ENCODE measurements at regions of chr2 and their contacts with region 1.

Region 1: DNA sequence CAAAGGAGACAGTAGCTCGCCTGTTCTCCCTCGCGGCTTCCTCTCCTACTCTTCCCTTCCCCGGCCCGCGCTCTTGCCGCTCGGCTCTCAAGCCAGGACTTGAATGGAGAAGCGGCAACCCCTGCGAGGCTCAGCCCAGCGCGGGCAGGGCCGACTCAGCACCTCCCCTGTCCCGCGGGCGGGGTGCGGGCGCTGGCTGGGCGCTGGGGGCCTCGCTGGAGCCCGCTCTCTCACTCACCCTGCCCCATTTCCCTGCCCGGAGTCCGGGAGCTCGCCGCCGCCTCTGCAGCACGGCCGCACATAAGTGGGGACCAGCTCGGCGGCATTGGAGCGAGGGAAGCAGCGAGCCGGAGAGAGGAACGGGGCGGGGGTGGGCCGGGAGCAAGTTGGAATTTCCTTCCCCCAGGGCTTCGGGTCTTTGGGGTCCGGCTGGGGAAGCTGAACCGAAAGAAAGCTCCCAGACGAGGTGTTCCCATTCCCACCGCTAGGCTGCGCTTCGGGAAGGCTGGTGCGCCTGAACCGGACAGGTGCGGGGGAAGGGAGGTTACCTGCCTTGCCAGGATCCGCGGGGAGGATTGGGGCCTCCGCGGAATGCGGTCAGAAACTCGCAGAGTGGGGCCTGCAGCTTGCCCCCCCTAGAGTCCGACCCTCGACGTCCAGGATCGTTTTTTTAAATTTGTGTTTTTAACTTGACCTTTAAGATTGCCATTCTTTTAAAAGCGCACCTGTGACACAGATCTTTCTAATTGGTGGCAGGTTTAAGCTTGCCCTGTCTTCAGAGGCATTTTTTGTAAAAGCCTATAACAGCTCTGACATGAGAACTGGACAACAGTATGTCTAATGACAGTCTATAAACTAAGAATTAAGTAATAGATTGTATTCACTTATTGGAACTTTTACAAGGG is at the start of gene COBLL1:
- DNase-seq: peak; percentile 84
- ATAC-seq: peak; percentile 77
- H3K4me3 ChIP-seq: peak within 1 kb of the TSS; percentile 76 to 96 (median 89)
- H3K27ac ChIP-seq: peak within 1 kb of the TSS; percentile 99
- H3K4me1 ChIP-seq: peaks cover 40% of the 10 kb centered on the region
- H3K27me3 ChIP-seq: no peaks in the 10 kb centered on the region; a peak in 1 of 5 replicates
- CTCF ChIP-seq: peak; percentile 98
- EP300 ChIP-seq: peak; percentile 22 to 51; a peak in 1 of 4 replicates
- POLR2A ChIP-seq: peak in 1 of 2 experiments; percentile 52; a peak in 3 of 4 replicates
- RAD21 ChIP-seq: peak; percentile 90
- total RNA-seq, gene COBLL1: 85.4 and 86.8 TPM in 2 replicates

Region 2: DNA sequence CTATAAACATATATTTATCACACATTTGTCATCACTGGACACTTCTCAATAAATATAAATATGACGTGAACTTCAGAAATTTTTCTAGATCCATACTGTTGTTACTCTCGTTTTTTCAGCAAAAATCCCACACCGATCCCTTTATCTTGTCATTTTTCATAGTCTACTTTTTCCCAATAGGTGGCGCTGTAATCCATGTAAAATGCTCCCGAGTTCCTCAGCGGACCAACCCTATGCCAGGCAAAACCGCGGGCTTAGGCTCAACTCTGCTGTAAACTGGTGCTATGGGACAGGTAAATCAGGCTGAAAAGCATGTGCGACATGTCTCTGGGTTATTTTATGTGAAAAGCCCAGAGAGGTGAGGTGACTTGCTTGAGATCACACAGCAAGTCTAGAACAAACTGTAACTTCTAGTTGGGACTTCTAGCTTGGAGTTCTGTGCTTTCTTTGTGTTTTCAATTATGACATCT is 104.3 kb before region 1 on chr2:
- CTCF ChIA-PET with region 1: interaction called, 12 read pairs
- POLR2A ChIA-PET with region 1: interaction called, 18 read pairs
- in situ Hi-C with region 1: loop called (anchors 5 kb)
- intact Hi-C with region 1: loop called (anchors 1 kb)
- DNase-seq: peak; percentile 82
- ATAC-seq: peak; percentile 92
- H3K4me3 ChIP-seq: no peak overlapping the region
- H3K27ac ChIP-seq: peak overlapping the region; percentile 22
- H3K4me1 ChIP-seq: peaks cover 82% of the 10 kb centered on the region
- H3K27me3 ChIP-seq: no peaks in the 10 kb centered on the region
- CTCF ChIP-seq: peak; percentile 93
- EP300 ChIP-seq: no peak
- POLR2A ChIP-seq: no peak
- RAD21 ChIP-seq: peak; percentile 93

Region 3: GRCh38 chr2:164810843-164811242 is 31.1 kb before region 1 on chr2:
- CTCF ChIA-PET with region 1: no interaction called
- POLR2A ChIA-PET with region 1: interaction called, 8 read pairs
- in situ Hi-C with region 1: no loop called
- intact Hi-C with region 1: loop called (anchors 2 kb)
- DNase-seq: peak; percentile 96
- ATAC-seq: peak; percentile 82
- H3K4me3 ChIP-seq: no peak overlapping the region
- H3K27ac ChIP-seq: peak overlapping the region; percentile 53
- H3K4me1 ChIP-seq: peaks cover 72% of the 10 kb centered on the region
- H3K27me3 ChIP-seq: no peaks in the 10 kb centered on the region
- CTCF ChIP-seq: no peak
- EP300 ChIP-seq: peak in 1 of 2 experiments; percentile 100
- POLR2A ChIP-seq: no peak
- RAD21 ChIP-seq: no peak

Region 4: GRCh38 chr2:164831887-164832286 is 10.1 kb before region 1 on chr2:
- CTCF ChIA-PET with region 1: no interaction called
- POLR2A ChIA-PET with region 1: interaction called, 23 read pairs
- in situ Hi-C with region 1: no loop called
- intact Hi-C with region 1: loop called (anchors 2 kb)
- DNase-seq: no peak
- ATAC-seq: no peak
- H3K4me3 ChIP-seq: no peak overlapping the region
- H3K27ac ChIP-seq: no peak overlapping the region
- H3K4me1 ChIP-seq: peaks cover 58% of the 10 kb centered on the region
- H3K27me3 ChIP-seq: no peaks in the 10 kb centered on the region
- CTCF ChIP-seq: no peak
- EP300 ChIP-seq: no peak
- POLR2A ChIP-seq: no peak
- RAD21 ChIP-seq: no peak

Region 5: DNA sequence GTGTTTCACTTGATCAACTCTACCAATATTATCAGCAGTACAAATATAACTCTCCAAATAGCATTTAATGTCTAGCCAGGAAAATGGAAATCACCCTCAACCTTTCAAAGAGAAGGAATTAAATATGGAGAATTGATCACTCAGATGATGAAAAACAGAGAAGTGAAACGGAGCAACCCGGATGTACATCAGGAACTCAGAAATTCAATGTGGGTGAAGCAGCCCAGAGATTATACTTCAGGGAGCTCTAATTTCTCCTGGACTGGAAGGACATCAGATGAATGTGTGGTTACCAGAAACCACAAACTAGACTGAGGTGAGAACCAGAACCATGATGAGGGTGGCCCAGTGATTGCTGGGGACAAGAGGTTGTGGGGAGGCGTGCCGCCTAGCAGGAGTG is 35.2 kb after region 1 on chr2:
- CTCF ChIA-PET with region 1: interaction called, 3 read pairs
- POLR2A ChIA-PET with region 1: interaction called, 43 read pairs
- in situ Hi-C with region 1: no loop called
- intact Hi-C with region 1: no loop called
- DNase-seq: no peak
- ATAC-seq: no peak
- H3K4me3 ChIP-seq: no peak overlapping the region
- H3K27ac ChIP-seq: peak overlapping the region; percentile 83
- H3K4me1 ChIP-seq: peaks cover 89% of the 10 kb centered on the region
- H3K27me3 ChIP-seq: no peaks in the 10 kb centered on the region
- CTCF ChIP-seq: no peak
- EP300 ChIP-seq: no peak
- POLR2A ChIP-seq: no peak
- RAD21 ChIP-seq: no peak

Region 6: DNA sequence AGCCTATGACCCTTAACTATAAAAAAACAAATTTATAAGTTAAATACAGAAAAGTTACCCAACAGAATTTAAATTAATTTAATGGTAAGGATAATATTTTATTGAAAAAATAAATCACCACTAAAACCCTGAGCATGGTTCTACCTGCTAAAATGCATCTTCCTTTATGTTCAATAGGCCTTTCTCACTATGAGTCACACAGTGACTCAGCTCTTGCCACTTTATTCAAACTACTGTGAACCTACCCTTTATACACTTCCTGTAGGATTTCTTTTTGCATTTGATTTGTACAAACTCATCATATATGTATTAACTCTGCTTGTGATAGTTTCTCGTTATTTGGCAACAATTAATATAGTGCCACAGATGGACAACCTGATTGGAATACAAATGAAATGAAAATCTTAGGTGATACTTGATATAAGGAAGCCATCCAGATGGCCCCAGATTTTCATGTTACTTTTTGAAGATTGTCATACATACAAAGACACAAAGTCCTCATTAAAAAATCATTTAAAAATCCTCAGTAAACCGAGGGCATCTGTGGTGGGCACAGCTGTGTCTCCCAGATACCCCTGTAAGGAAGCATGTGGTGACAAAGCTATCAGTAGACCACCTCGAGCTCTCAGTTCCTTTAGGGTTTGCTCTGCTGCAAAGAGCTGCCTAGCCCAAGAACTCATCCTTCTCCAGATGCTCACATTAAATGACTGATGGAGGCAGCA is 54.8 kb after region 1 on chr2:
- CTCF ChIA-PET with region 1: no interaction called
- POLR2A ChIA-PET with region 1: interaction called, 8 read pairs
- in situ Hi-C with region 1: no loop called
- intact Hi-C with region 1: loop called (anchors 5 kb)
- DNase-seq: peak; percentile 63
- ATAC-seq: peak; percentile 69
- H3K4me3 ChIP-seq: no peak overlapping the region
- H3K27ac ChIP-seq: peak overlapping the region; percentile 41
- H3K4me1 ChIP-seq: peaks cover 34% of the 10 kb centered on the region
- H3K27me3 ChIP-seq: no peaks in the 10 kb centered on the region
- CTCF ChIP-seq: no peak
- EP300 ChIP-seq: no peak; a peak in 1 of 4 replicates
- POLR2A ChIP-seq: no peak
- RAD21 ChIP-seq: no peak

Region 7: GRCh38 chr2:164917296-164917903 is 75.4 kb after region 1 on chr2:
- CTCF ChIA-PET with region 1: interaction called, 14 read pairs
- POLR2A ChIA-PET with region 1: interaction called, 45 read pairs
- in situ Hi-C with region 1: loop called (anchors 5 kb)
- intact Hi-C with region 1: loop called (anchors 1 kb)
- DNase-seq: peak; percentile 74
- ATAC-seq: peak; percentile 61
- H3K4me3 ChIP-seq: no peak overlapping the region
- H3K27ac ChIP-seq: no peak overlapping the region
- H3K4me1 ChIP-seq: peaks cover 56% of the 10 kb centered on the region
- H3K27me3 ChIP-seq: no peaks in the 10 kb centered on the region
- CTCF ChIP-seq: peak; percentile 90
- EP300 ChIP-seq: 0 out of 4 replicates have a peak, but pooled peaks of 1 of the 2 experiments have one; percentile 5
- POLR2A ChIP-seq: no peak
- RAD21 ChIP-seq: peak; percentile 93

Measured in HepG2 (cell line).